Natural killer cell (primary cell): ENCODE measurements at regions of chr19 and their contacts with region 1.

Region 1: DNA sequence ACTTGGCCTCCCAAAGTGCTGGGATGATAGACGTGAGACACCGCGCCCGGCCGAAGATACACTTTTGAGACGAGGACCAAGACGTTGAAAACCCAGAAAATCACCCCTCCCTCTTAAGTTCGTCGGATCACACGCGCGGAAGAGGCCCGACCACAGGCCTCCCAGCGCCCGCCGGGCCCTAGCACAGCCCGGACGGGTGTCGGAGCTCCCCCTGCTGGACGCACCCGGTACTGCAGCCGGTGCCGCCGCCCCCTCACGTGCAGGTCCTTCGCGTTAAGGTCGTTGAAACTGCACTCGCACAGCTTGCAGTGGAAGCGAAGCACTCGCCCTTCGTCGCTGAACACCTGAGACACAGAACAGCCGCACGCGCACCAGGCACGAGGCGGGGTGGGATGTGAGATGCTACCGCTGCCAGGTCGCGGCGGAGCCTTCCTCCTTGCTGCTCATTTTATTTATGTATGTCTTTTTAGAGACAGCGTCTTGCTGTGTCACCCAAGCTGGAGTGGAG is 35.7 kb upstream of the MATK start:
- DNase-seq: peak; percentile 92 to 94
- ATAC-seq: peak; percentile 96 to 99 (median 99)
- H3K4me3 ChIP-seq: no peak overlapping the region
- H3K4me3 Mint-ChIP-seq: peak overlapping the region; percentile 70
- H3K27ac ChIP-seq: no peak overlapping the region
- H3K27ac Mint-ChIP-seq: peak overlapping the region; percentile 81 to 86
- H3K4me1 ChIP-seq: peaks cover 33% of the 10 kb centered on the region
- H3K4me1 Mint-ChIP-seq: peaks cover 10 to 34% of the 10 kb centered on the region in 2 donors
- H3K27me3 ChIP-seq: no peaks in the 10 kb centered on the region
- H3K27me3 Mint-ChIP-seq: no peaks in the 10 kb centered on the region
- CTCF ChIP-seq: peak; percentile 98

Region 2: DNA sequence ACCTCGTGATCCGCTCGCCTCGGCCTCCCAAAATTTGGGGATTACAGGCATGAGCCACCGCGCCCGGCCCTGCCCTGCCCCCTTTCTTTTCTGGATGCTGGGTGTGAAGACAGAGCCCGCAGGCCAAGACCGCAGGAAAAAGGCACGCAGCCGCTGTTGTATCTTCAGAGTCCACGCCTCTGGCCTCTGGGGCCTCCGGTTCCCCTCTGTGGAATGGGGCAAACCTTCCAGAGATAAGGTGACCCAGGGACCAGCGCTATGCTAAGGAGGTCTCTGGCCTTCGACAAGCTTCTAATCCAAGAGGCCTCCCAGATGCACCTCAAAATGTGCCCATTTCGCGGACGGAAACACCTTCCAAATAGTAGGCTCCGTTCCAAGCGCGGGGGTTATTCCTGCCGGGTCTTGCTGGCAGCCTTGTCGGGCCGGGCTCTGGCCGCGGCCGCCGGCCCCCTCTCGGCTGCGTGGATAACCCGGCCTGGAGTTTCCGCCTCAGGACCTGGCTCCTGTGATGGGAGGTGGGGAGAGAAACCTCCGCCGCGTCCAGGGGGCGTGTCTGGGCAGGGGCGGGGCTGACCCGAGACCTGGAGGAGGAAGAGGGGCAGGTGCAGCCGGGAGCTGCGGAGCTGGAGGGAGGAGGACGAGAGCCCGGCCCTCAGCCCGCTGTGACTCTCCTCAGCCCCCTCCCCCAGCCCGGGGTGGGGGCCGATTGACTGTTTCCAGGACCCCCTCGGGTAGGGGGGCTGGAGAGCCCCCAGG is 100.6 kb before region 1 on chr19:
- intact Hi-C with region 1: loop called (anchors 5 kb)
- DNase-seq: peak; percentile 83 to 90
- ATAC-seq: peak; percentile 95 to 98 (median 98)
- H3K4me3 ChIP-seq: peak overlapping the region; percentile 32
- H3K4me3 Mint-ChIP-seq: peak overlapping the region; percentile 64
- H3K27ac ChIP-seq: no peak overlapping the region
- H3K27ac Mint-ChIP-seq: peak overlapping the region in 1 of 2 donors; percentile 36
- H3K4me1 ChIP-seq: peaks cover 19% of the 10 kb centered on the region
- H3K4me1 Mint-ChIP-seq: peaks cover 0 to 16% of the 10 kb centered on the region in 2 donors
- H3K27me3 ChIP-seq: peaks cover 29% of the 10 kb centered on the region
- H3K27me3 Mint-ChIP-seq: peaks cover 0 to 23% of the 10 kb centered on the region in 2 donors
- CTCF ChIP-seq: no peak

Region 3: GRCh38 chr19:3762501-3763459 is 59.1 kb before region 1 on chr19 and contains the start of gene MRPL54:
- intact Hi-C with region 1: loop called (anchors 1 kb)
- DNase-seq: peak; percentile 99 to 100
- ATAC-seq: peak; percentile 78 to 91 (median 82)
- H3K4me3 ChIP-seq: peak within 1 kb of the TSS; percentile 100
- H3K4me3 Mint-ChIP-seq: peak within 1 kb of the TSS; percentile 96
- H3K27ac ChIP-seq: peak within 1 kb of the TSS; percentile 97
- H3K27ac Mint-ChIP-seq: peak within 1 kb of the TSS; percentile 99 to 100
- H3K4me1 ChIP-seq: peaks cover 41% of the 10 kb centered on the region
- H3K4me1 Mint-ChIP-seq: peaks cover 27 to 34% of the 10 kb centered on the region in 2 donors
- H3K27me3 ChIP-seq: no peaks in the 10 kb centered on the region
- H3K27me3 Mint-ChIP-seq: no peaks in the 10 kb centered on the region
- CTCF ChIP-seq: no peak
- total RNA-seq, gene MRPL54: 54.1 to 60.5 (median 55.5) TPM

Region 4: GRCh38 chr19:3783660-3784584 is 38.0 kb before region 1 on chr19:
- intact Hi-C with region 1: loop called (anchors 1 kb)
- DNase-seq: peak; percentile 67 to 70
- ATAC-seq: peak; percentile 66 to 71 (median 70)
- H3K4me3 ChIP-seq: peak overlapping the region; percentile 90
- H3K4me3 Mint-ChIP-seq: peak overlapping the region; percentile 90
- H3K27ac ChIP-seq: peak overlapping the region; percentile 73
- H3K27ac Mint-ChIP-seq: peak overlapping the region; percentile 83 to 93
- H3K4me1 ChIP-seq: peaks cover 61% of the 10 kb centered on the region
- H3K4me1 Mint-ChIP-seq: peaks cover 22 to 44% of the 10 kb centered on the region in 2 donors
- H3K27me3 ChIP-seq: no peaks in the 10 kb centered on the region
- H3K27me3 Mint-ChIP-seq: no peaks in the 10 kb centered on the region
- CTCF ChIP-seq: peak; percentile 72